ENCODE measurements at regions of chr15 and their contacts with region 1.

Region 1: GRCh38 chr15:82294061-82294690 is 31.6 kb downstream of the SAXO2 start:
- DNase-seq: no peak
- H3K4me3 ChIP-seq: no peak overlapping the region
- H3K27ac ChIP-seq: no peak overlapping the region
- H3K4me1 ChIP-seq: no peaks in the 10 kb centered on the region
- H3K27me3 ChIP-seq: no peaks in the 10 kb centered on the region
- CTCF ChIP-seq: no peak

Region 2: GRCh38 chr15:82262422-82263026 is 31.7 kb before region 1 on chr15 and contains the starts of genes EFL1 and SAXO2:
- CTCF ChIA-PET with region 1: no interaction called
- POLR2A ChIA-PET with region 1: interaction called, 24 read pairs
- intact Hi-C with region 1: no loop called
- DNase-seq: peak; percentile 72 to 87
- H3K4me3 ChIP-seq: peak within 1 kb of the TSS; percentile 58
- H3K27ac ChIP-seq: peak within 1 kb of the TSS; percentile 47; the same call in 1 of the 2 replicates
- H3K4me1 ChIP-seq: peaks cover 17% of the 10 kb centered on the region
- H3K27me3 ChIP-seq: no peaks in the 10 kb centered on the region
- CTCF ChIP-seq: no peak
- total RNA-seq, gene EFL1: 14.4 and 17.2 TPM in 2 replicates
- total RNA-seq, gene SAXO2: 1.7 and 2.7 TPM in 2 replicates

Region 3: DNA sequence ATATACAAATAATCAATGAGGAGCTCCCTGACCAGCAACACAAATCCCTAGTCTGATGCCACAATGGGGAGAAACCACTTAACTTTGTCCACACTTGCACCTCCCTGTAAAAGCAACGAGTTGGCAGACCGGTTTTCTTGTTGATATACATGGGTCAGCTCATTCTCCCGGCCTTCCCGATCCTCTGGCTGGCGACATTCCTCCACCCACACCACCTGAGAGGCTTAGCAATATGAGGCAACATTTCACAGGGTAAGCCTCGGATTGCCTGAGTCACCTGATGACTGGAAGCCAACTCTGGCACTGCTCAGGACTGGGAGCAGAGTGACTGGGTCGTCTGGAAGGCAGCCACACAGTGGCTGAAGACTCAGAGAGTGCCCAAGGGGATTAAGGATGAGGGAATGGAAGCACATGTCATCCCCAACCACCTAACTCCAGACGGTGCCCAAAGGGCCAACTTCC is 648.5 kb after region 1 on chr15:
- CTCF ChIA-PET with region 1: no interaction called
- POLR2A ChIA-PET with region 1: no interaction called
- intact Hi-C with region 1: no loop called
- DNase-seq: peak; percentile 86 to 94
- H3K4me3 ChIP-seq: no peak overlapping the region; the same call in 1 of the 2 replicates
- H3K27ac ChIP-seq: peak overlapping the region; percentile 63
- H3K4me1 ChIP-seq: peaks cover 23% of the 10 kb centered on the region
- H3K27me3 ChIP-seq: peaks cover 9% of the 10 kb centered on the region; the same call in 1 of the 2 replicates
- CTCF ChIP-seq: no peak

Measured in PC-9 (cell line).